GM23248 (cell line): ENCODE measurements at regions of chrX and their contacts with region 1.

Region 1: DNA sequence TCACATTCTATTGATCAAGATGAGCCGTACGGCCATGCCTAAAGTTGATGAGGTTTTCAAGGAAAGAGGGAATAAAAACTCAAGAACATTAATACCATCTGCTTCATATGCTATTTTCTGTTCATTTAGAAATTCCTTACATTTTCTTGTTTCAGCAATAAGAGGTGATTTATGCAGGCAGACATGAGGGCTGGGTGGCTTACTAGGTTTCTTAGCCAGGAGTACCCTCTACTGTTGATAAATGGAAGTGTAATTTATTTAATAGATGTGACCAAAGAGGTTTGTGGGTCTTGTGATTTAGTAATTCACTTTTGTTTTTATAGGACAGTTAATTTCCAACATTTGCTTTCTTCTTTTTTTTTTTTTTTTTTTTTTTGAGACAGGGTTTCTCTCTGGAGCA is 6.4 kb upstream of the SMIM9 start:
- DNase-seq: peak; percentile 64
- H3K4me3 ChIP-seq: no peak overlapping the region
- H3K27ac ChIP-seq: no peak overlapping the region
- H3K4me1 ChIP-seq: no peaks in the 10 kb centered on the region; the same call in 1 of the 2 replicates
- H3K27me3 ChIP-seq: no peaks in the 10 kb centered on the region

Region 2: DNA sequence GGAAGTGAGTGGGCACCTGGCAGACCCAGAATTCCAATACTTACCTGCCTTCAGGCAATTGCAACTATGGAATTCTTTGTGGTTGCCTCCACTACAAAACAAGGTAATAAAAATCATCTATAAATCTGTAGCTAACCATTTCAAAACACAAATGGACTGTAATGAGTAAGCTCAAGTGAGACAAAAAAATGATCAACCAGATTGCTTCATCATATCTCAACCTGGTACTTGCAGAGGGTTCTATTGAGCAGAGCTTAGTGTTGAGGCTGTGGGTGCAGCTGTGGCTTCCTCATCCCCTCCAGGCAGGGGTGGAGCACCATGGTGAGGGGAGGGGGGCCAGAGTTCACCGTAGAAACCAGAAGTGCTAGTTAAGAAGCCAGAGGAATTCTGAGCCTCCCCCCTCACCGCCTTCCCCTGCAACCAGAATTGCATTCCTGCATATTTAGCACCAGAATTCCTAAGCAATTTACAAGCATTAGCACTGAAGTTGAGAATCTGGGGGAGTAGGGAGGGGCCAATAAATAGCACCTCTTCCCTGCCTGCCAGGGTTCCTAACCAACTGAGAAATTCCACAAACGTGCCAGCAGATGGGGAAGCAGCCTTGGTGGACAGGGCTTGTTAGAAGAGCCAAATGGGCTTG is 244.4 kb before region 1 on chrX:
- in situ Hi-C with region 1: loop called (anchors 25 kb)
- DNase-seq: peak; percentile 73
- H3K4me3 ChIP-seq: no peak overlapping the region
- H3K27ac ChIP-seq: peak overlapping the region; percentile 52
- H3K4me1 ChIP-seq: peaks cover 23% of the 10 kb centered on the region
- H3K27me3 ChIP-seq: no peaks in the 10 kb centered on the region

Region 3: GRCh38 chrX:154649503-154650470 is 191.1 kb before region 1 on chrX:
- in situ Hi-C with region 1: no loop called
- DNase-seq: no peak
- H3K4me3 ChIP-seq: no peak overlapping the region
- H3K27ac ChIP-seq: no peak overlapping the region
- H3K4me1 ChIP-seq: no peaks in the 10 kb centered on the region
- H3K27me3 ChIP-seq: no peaks in the 10 kb centered on the region